ENCODE measurements at regions of chr10 and their contacts with region 1.

Region 1: GRCh38 chr10:72875250-72876055 is 18.1 kb upstream of the OIT3 start:
- DNase-seq: peak; percentile 98
- ATAC-seq: peak; percentile 86
- H3K4me3 ChIP-seq: no peak overlapping the region
- H3K27ac ChIP-seq: no peak overlapping the region
- H3K4me1 ChIP-seq: peaks cover 3% of the 10 kb centered on the region; the same call in 1 of the 2 replicates
- H3K27me3 ChIP-seq: peaks cover 30% of the 10 kb centered on the region
- CTCF ChIP-seq: peak; percentile 100

Region 2: GRCh38 chr10:72364239-72364777 is 511.1 kb before region 1 on chr10:
- CTCF ChIA-PET with region 1: no interaction called
- POLR2A ChIA-PET with region 1: no interaction called
- intact Hi-C with region 1: loop called (anchors 1 kb)
- DNase-seq: peak; percentile 88
- ATAC-seq: peak; percentile 98
- H3K4me3 ChIP-seq: no peak overlapping the region; the same call in 1 of the 2 replicates
- H3K27ac ChIP-seq: peak overlapping the region; percentile 26; the same call in 1 of the 2 replicates
- H3K4me1 ChIP-seq: peaks cover 12% of the 10 kb centered on the region
- H3K27me3 ChIP-seq: no peaks in the 10 kb centered on the region
- CTCF ChIP-seq: peak; percentile 81

Region 3: GRCh38 chr10:72659694-72660093 is 215.8 kb before region 1 on chr10:
- CTCF ChIA-PET with region 1: no interaction called
- POLR2A ChIA-PET with region 1: no interaction called
- intact Hi-C with region 1: no loop called
- DNase-seq: no peak
- ATAC-seq: no peak
- H3K4me3 ChIP-seq: no peak overlapping the region
- H3K27ac ChIP-seq: no peak overlapping the region
- H3K4me1 ChIP-seq: peaks cover 6% of the 10 kb centered on the region; the same call in 1 of the 2 replicates
- H3K27me3 ChIP-seq: no peaks in the 10 kb centered on the region
- CTCF ChIP-seq: no peak

Region 4: DNA sequence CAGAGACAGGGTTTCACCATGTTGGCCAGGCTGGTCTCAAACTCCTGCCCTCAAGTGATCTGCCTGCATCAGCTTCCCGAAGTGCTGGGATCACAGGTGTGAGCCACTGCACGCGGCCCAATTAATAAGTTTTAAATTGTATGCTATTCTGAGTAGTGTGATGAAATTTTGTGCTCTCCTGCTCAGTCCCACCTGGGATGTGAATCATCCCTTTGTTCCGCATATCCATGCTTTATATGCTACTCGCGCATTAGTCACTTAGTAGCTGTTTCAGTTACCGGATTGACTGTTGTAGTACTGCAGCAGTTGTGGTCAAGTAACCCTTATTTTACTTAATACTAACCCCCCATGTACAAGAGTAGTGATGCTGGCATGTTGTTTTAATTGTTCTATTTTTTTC is 29.2 kb before region 1 on chr10:
- CTCF ChIA-PET with region 1: no interaction called
- POLR2A ChIA-PET with region 1: no interaction called
- intact Hi-C with region 1: loop called (anchors 2 kb)
- DNase-seq: peak; percentile 100
- ATAC-seq: peak; percentile 99
- H3K4me3 ChIP-seq: no peak overlapping the region
- H3K27ac ChIP-seq: peak overlapping the region; percentile 8; the same call in 1 of the 2 replicates
- H3K4me1 ChIP-seq: peaks cover 25% of the 10 kb centered on the region
- H3K27me3 ChIP-seq: no peaks in the 10 kb centered on the region
- CTCF ChIP-seq: no peak

Measured in PC-3 (cell line).